Gastrocnemius medialis (tissue), 4 donors: ENCODE measurements at regions of chr17 and their contacts with region 1.

Region 1: GRCh38 chr17:39605492-39606433 is 2.0 kb downstream of the NEUROD2 start:
- DNase-seq: no peak
- ATAC-seq: no peak
- H3K4me3 ChIP-seq: peak overlapping the region in 3 of 4 donors; percentile 21 to 41 (median 37)
- H3K27ac ChIP-seq: no peak overlapping the region
- H3K4me1 ChIP-seq: peaks cover 25% of the 10 kb centered on the region in 2 donors
- H3K27me3 ChIP-seq: peaks cover 86 to 96% (median 88%) of the 10 kb centered on the region in 3 donors
- CTCF ChIP-seq: no peak
- POLR2A ChIP-seq: no peak

Region 2: GRCh38 chr17:39643271-39643670 is 37.5 kb after region 1 on chr17:
- in situ Hi-C with region 1: no loop called
- intact Hi-C with region 1: loop called (anchors 1 kb)
- DNase-seq: no peak
- ATAC-seq: peak; percentile 32 to 46
- H3K4me3 ChIP-seq: no peak overlapping the region
- H3K27ac ChIP-seq: no peak overlapping the region
- H3K4me1 ChIP-seq: peaks cover 34 to 35% of the 10 kb centered on the region in 2 donors
- H3K27me3 ChIP-seq: no peaks in the 10 kb centered on the region
- CTCF ChIP-seq: no peak
- POLR2A ChIP-seq: no peak

Region 3: DNA sequence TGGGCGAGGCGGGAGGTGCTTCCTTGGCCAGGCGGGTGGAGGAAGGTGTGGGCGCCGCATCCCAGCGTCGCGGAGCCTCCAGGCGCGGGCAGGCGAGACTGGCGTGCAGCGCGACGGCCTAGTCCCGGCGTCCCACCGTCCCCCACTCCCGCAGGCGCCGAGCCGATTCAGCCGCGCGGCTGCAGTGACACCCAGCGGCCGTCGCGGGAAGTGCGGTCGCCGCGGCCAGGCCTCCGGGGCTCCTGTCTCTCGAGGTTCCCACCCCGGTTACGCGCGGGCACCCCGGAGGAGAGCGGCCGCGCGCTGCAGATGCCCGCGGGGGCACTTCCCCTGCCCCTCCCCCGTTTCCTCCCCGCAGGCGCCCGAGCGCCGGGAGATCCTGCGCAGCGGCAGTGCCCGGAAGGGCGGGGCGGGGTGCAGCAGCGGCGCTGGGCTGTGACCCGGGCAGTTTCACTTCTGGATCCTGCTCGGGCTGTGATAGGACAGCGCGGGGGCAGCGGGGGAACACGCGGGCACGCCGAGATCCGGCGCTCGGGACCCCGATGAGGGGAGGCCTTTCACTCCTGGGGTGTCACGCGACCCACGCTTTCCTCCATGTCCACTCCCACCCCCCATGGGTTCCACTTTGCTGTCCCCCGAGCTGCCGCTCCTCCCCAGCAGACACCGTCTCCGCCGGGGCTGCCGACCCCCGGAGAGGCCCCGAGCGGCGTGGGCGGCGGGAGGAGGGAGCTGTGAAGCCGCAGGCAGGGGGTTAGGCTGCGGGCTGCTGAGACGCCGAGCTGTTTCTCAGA is 148.6 kb after region 1 on chr17:
- in situ Hi-C with region 1: no loop called
- intact Hi-C with region 1: no loop called
- DNase-seq: peak; percentile 67 to 85
- ATAC-seq: peak; percentile 92 to 95
- H3K4me3 ChIP-seq: peak overlapping the region; percentile 62 to 85 (median 76)
- H3K27ac ChIP-seq: peak overlapping the region; percentile 76 to 86 (median 83)
- H3K4me1 ChIP-seq: peaks cover 0 to 5% of the 10 kb centered on the region in 2 donors
- H3K27me3 ChIP-seq: no peaks in the 10 kb centered on the region
- CTCF ChIP-seq: peak; percentile 85 to 100 (median 98)
- POLR2A ChIP-seq: peak; percentile 51 to 67

Region 4: GRCh38 chr17:39800540-39800939 is 194.8 kb after region 1 on chr17:
- in situ Hi-C with region 1: no loop called
- intact Hi-C with region 1: no loop called
- DNase-seq: no peak
- ATAC-seq: no peak
- H3K4me3 ChIP-seq: no peak overlapping the region
- H3K27ac ChIP-seq: no peak overlapping the region
- H3K4me1 ChIP-seq: no peaks in the 10 kb centered on the region
- H3K27me3 ChIP-seq: no peaks in the 10 kb centered on the region
- CTCF ChIP-seq: no peak
- POLR2A ChIP-seq: no peak